Caco-2 (cell line): ENCODE measurements at regions of chr3 and their contacts with region 1.

Region 1: DNA sequence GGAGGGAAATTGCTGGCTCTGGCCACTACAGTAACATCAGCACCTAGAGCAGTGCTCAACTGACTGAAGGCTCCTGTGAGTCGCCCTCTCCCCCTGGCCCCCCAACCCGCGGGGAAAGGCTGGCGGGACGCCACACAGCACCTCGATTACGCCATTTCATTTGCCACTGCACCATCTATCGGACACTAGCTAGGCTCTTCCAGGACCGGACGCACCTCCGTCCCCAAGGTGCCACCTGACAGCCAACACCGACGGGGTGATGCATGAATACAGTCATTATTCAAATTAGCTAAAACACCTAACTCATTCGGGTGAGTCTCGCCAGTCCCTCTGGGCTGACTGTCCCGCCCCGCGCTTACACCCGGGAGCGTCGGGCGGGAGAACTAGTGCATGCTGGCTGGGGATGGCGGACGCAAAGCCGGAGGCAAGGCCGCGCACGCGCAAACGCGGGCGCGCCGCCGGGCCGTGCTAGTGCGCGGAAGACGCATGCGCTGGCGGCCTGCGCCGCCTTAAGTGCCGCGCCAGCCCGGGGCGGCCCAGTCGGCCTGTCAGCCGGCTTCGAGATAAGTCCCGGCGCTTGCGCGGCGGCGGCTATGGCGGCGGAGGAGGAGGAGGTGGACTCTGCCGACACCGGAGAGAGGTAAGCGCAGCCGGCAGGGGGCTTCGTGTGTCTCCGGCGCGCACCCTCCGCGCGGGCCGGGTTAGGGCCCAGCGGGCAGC is at the start of gene ABHD5:
- DNase-seq: peak; percentile 92 to 95
- H3K4me3 ChIP-seq: peak within 1 kb of the TSS; percentile 74
- H3K4me3 Mint-ChIP-seq: peak within 1 kb of the TSS; percentile 97
- H3K27ac Mint-ChIP-seq: peak within 1 kb of the TSS; percentile 90
- H3K4me1 ChIP-seq: peaks cover 17% of the 10 kb centered on the region; the same call in 1 of the 2 replicates
- H3K4me1 Mint-ChIP-seq: peaks cover 10% of the 10 kb centered on the region
- H3K27me3 ChIP-seq: no peaks in the 10 kb centered on the region
- H3K27me3 Mint-ChIP-seq: no peaks in the 10 kb centered on the region
- CTCF ChIP-seq: peak; percentile 20 to 38
- total RNA-seq, gene ABHD5: 12.3 and 12.4 TPM in 2 replicates

Region 2: GRCh38 chr3:43540624-43541023 is 149.9 kb before region 1 on chr3:
- CTCF ChIA-PET with region 1: no interaction called
- POLR2A ChIA-PET with region 1: no interaction called
- intact Hi-C with region 1: loop called (anchors 1 kb)
- DNase-seq: no peak
- H3K4me3 ChIP-seq: no peak overlapping the region
- H3K4me3 Mint-ChIP-seq: no peak overlapping the region
- H3K27ac Mint-ChIP-seq: no peak overlapping the region
- H3K4me1 ChIP-seq: no peaks in the 10 kb centered on the region
- H3K4me1 Mint-ChIP-seq: no peaks in the 10 kb centered on the region
- H3K27me3 ChIP-seq: no peaks in the 10 kb centered on the region
- H3K27me3 Mint-ChIP-seq: no peaks in the 10 kb centered on the region
- CTCF ChIP-seq: no peak

Region 3: DNA sequence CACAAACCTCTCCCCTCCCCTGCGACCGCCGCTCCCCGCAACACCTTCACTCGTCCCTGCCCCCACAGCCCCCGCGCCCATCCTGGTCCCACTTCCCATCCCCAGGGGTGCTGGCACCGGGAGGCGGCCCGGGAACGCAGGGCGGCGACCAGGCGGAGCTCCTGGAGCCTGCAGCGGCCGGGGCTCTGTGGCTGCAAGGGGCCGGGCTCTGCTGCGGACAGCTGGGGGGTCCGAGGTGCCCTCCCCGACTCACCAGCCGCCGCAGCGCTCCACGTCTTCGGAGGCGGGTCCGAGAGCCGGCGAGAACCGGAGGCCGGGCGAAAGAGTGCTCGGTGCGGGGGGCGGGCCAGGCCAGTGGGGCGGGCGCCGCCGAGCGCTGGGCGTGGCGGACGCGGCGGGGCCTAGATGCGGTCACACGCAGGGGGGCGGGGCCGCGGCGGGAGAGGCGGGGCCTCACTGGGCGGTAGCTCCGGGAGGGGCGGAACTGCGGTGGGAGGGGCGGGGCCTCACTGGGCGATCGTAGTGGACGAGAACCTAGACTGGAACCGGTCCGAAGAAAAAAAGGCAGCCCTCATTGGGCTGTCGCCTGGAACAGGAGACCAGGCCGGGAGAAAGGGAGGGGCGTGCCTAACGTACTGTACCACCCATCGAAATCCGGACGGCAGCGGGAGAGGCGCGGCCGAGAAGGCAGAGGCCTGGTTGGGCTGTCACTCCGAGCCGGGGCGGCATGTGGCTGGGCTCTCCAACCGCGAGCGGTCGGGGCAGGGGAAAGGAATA is 68.7 kb before region 1 on chr3 and contains the start of gene ANO10:
- CTCF ChIA-PET with region 1: interaction called, 4 read pairs
- POLR2A ChIA-PET with region 1: interaction called, 16 read pairs
- intact Hi-C with region 1: loop called (anchors 1 kb)
- DNase-seq: peak; percentile 98 to 99
- H3K4me3 ChIP-seq: peak within 1 kb of the TSS; percentile 80
- H3K4me3 Mint-ChIP-seq: peak within 1 kb of the TSS; percentile 95
- H3K27ac Mint-ChIP-seq: peak within 1 kb of the TSS; percentile 88
- H3K4me1 ChIP-seq: no peaks in the 10 kb centered on the region
- H3K4me1 Mint-ChIP-seq: no peaks in the 10 kb centered on the region
- H3K27me3 ChIP-seq: no peaks in the 10 kb centered on the region
- H3K27me3 Mint-ChIP-seq: no peaks in the 10 kb centered on the region
- CTCF ChIP-seq: no peak
- total RNA-seq, gene ANO10: 24.1 and 27.6 TPM in 2 replicates

Region 4: DNA sequence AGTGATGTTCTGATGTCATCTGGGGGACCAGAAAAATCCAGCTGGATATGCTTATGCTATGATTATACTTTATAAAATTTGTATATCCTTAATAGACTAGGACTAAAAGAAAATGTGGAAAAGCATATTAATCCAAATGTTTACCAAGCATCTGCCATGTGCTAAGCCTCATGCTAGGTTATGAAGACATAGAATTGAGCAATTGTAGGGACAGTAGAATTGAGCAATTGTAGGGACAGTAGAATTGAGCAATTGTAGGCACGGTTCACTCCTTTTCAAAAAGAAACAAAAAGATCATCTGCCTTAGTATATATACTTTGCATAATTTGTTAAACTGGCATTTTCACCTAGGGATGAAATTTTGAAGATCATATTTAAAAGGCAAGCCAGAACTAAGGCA is 18.5 kb after region 1 on chr3:
- CTCF ChIA-PET with region 1: no interaction called
- POLR2A ChIA-PET with region 1: no interaction called
- intact Hi-C with region 1: no loop called
- DNase-seq: no peak
- H3K4me3 ChIP-seq: no peak overlapping the region
- H3K4me3 Mint-ChIP-seq: no peak overlapping the region
- H3K27ac Mint-ChIP-seq: peak overlapping the region; percentile 53
- H3K4me1 ChIP-seq: no peaks in the 10 kb centered on the region
- H3K4me1 Mint-ChIP-seq: no peaks in the 10 kb centered on the region
- H3K27me3 ChIP-seq: no peaks in the 10 kb centered on the region
- H3K27me3 Mint-ChIP-seq: no peaks in the 10 kb centered on the region
- CTCF ChIP-seq: no peak

Region 5: GRCh38 chr3:43736558-43736995 is 46.0 kb after region 1 on chr3:
- CTCF ChIA-PET with region 1: no interaction called
- POLR2A ChIA-PET with region 1: no interaction called
- intact Hi-C with region 1: loop called (anchors 5 kb)
- DNase-seq: peak; percentile 24 to 50
- H3K4me3 ChIP-seq: no peak overlapping the region
- H3K4me3 Mint-ChIP-seq: no peak overlapping the region
- H3K27ac Mint-ChIP-seq: peak overlapping the region; percentile 10
- H3K4me1 ChIP-seq: peaks cover 18% of the 10 kb centered on the region
- H3K4me1 Mint-ChIP-seq: peaks cover 14% of the 10 kb centered on the region
- H3K27me3 ChIP-seq: no peaks in the 10 kb centered on the region
- H3K27me3 Mint-ChIP-seq: peaks cover 3% of the 10 kb centered on the region
- CTCF ChIP-seq: no peak

Region 6: GRCh38 chr3:43759297-43759782 is 68.8 kb after region 1 on chr3:
- CTCF ChIA-PET with region 1: no interaction called
- POLR2A ChIA-PET with region 1: interaction called, 15 read pairs
- intact Hi-C with region 1: loop called (anchors 1 kb)
- DNase-seq: peak; percentile 64 to 80
- H3K4me3 ChIP-seq: no peak overlapping the region
- H3K4me3 Mint-ChIP-seq: peak overlapping the region; percentile 64
- H3K27ac Mint-ChIP-seq: peak overlapping the region; percentile 89
- H3K4me1 ChIP-seq: peaks cover 33% of the 10 kb centered on the region
- H3K4me1 Mint-ChIP-seq: peaks cover 31% of the 10 kb centered on the region
- H3K27me3 ChIP-seq: no peaks in the 10 kb centered on the region
- H3K27me3 Mint-ChIP-seq: no peaks in the 10 kb centered on the region
- CTCF ChIP-seq: peak in 1 of 2 experiments; percentile 27